Activated T-helper 1 cell treated with anti-CD3 and anti-CD28 coated beads, Interleukin-12 subunit alpha, Interleukin-12 subunit beta, Interleukin-2, Interleukin-4 antibody, amounts not matched to agents 30 ng/mL and 10 ng/mL and 1 ng/mL, durations not matched to agents 14 hours and 24 hours and 36 hours (primary cell): ENCODE measurements at regions of chr4 and their contacts with region 1.

Region 1: DNA sequence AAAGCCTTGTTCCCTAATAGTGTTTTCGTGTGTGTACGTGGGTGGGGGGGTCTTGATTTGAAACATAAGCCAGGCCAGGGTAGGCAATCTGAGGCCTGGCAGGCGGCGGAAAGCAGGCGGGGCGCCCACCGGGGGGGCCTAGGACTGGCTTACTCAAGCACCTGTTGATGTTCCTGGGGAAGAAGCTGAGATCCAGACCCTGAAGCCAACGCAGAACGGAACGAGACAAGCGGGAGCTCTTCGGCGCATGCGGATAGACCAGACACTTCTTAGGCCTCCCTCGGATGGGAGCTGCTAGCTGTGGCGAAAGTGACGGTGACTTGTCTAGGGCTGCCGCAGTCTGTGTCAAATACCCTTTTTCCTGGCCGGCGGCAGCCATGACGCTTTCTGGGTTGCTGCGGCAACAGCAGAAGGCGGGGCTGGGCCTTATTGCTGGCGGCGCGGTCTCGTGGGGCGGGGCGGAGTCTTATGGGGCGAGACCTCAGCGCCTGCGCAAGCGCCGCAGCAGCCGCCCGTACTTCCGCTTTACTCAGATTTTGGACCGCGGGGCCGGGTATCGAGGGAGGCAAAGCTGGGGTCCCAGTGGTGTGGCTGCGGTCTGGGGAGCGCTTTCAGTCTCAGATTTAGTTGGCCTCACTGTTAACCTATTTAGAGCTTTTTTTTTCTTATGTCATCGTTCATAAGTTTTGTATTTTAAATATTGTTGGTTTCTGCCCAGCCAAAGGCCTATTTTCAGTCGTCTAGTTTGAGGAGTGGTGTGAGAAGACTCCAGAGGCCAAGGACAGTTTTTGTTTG is at the start of gene SPATA4:
- DNase-seq: peak; percentile 88
- H3K4me3 Mint-ChIP-seq: peak within 1 kb of the TSS; percentile 70
- H3K27ac Mint-ChIP-seq: peak within 1 kb of the TSS; percentile 72
- H3K4me1 Mint-ChIP-seq: peaks cover 22% of the 10 kb centered on the region
- H3K27me3 Mint-ChIP-seq: peaks cover 33% of the 10 kb centered on the region
- total RNA-seq, gene SPATA4: not detected in 2 replicates

Region 2: DNA sequence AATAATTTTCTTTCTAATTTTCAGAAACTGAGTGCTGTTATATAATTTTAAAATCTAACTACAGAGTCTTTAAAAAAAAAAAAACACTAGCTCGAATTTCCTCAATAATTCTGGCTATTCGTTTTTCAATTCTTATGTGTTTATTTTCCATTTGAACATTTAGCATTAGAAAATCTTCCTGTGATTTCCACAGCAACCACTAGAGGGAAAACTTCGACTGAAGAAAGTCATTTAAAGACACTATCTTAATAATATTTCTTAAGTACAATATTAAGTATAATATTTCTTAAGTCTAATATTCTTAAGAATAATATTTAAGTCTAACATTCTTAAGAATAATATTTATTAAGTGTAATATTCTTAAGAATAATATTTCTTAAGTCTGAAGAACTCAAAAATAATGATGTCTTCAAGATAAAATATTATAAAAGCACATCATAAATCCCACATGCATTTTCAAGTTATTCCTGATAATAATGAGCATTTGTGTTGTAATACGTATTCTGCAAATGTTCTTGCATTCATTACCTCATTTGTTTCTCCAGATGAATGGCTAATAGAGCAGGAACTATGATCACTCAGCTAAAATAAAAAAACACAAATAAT is 248.2 kb before region 1 on chr4:
- intact Hi-C with region 1: loop called (anchors 2 kb)
- DNase-seq: no peak
- H3K4me3 Mint-ChIP-seq: no peak overlapping the region
- H3K27ac Mint-ChIP-seq: no peak overlapping the region
- H3K4me1 Mint-ChIP-seq: peaks cover 8% of the 10 kb centered on the region
- H3K27me3 Mint-ChIP-seq: peaks cover 9% of the 10 kb centered on the region

Region 3: DNA sequence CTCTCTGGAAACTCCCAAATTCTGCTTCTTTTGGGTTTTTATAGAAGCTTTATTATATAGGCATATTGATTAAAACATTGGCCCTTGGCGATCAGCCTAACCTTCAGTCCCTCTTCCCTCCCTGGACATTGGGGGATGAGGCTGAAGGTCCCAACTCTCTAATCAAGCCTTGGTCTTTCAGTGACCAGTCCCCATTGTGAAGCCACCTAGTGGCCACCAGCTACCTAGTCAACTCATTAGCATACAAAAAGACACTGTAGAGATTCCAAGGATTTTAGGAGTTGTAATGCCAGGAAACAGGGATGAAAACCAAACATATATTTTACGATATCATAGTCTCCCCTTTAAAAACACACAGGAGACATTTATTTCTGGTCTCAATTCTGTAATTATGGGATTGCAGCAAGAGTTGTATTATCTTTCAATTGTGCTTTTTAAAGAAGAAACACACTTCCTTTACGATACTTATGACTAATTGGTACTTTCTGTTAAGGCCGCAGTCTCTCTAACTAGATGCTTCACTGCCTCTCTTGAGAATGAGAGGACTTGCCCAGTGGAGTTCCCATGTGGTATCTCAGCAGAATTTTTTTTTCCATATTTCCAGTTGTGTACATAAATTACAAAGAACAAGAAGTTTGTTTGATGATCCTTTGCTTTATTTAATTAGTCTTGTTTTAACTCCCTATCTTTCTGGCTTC is 71.5 kb before region 1 on chr4:
- intact Hi-C with region 1: loop called (anchors 1 kb)
- DNase-seq: no peak
- H3K4me3 Mint-ChIP-seq: no peak overlapping the region
- H3K27ac Mint-ChIP-seq: no peak overlapping the region
- H3K4me1 Mint-ChIP-seq: peaks cover 10% of the 10 kb centered on the region
- H3K27me3 Mint-ChIP-seq: no peaks in the 10 kb centered on the region